ENCODE measurements at regions of chr16 and their contacts with region 1.

Region 1: DNA sequence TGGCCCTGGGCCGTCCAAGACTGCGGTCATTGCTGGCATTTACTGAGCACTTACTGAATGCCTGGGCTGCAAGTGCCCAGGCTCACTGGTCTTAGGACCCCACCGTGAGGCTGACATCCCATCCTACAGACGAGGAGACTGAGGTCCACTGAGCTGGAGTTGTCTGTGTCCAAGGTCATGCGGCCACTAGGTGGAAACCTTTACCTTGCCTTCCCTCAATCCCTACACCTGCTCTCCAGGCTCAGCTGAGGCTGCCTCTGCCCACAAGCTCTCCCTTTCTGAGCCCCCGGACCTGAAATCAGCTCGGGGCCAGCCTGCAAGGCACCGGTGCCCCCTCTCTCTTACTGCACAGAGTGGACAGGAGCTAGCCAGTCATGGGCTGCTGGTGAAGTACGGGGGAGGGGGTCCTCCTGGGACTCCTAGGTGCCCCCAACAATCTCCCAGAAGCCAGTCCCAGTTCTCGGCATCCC is 1.5 kb downstream of the CASKIN1 start:
- DNase-seq: peak; percentile 66 to 69
- H3K4me3 ChIP-seq: no peak overlapping the region
- H3K27ac ChIP-seq: no peak overlapping the region
- H3K4me1 ChIP-seq: peaks cover 10 to 13% of the 10 kb centered on the region in 2 donors
- H3K27me3 ChIP-seq: no peaks in the 10 kb centered on the region
- CTCF ChIP-seq: peak; percentile 34 to 80 (median 64)
- POLR2A ChIP-seq: no peak

Region 2: DNA sequence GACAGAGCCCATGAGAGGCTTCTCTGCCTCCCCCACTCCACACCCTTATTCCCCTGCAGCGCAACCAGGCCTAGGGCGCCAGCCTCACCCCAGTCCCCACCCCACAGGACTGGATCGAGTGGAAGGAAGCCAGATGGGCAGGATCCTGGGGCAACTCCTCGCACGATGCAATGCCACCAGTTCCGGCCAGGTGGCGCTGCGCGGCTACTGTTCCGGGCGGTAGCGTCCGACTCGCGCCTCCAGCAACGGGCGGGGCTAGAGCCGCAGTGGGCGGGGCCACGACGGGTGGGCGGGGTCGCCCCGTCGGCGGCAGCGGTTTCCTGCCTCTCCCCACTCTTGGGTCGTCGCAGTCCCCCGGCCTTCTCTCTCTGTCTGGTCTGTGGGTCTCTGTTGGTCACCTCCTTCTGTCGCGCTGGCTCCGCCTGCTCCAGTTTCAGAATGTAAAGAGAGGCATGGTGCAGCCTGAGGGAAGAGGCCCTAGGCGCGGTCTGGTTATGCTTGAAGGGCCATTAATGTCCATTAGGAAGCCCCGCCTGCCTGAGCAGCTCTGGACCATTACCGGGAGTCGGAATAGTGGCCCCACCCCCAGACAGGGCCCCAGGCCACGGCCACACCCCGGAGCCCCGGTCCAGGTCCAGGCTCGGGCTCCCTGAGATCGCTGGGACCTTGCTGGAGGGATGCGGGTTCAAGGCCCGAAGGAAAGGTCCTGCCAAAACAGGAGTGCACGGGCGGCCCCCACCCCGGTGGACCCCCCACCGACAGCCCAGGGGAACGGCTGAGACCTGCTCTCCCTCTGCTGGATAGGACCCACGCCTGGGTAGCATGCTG is 171.6 kb before region 1 on chr16:
- intact Hi-C with region 1: no loop called
- DNase-seq: peak; percentile 91
- H3K4me3 ChIP-seq: peak overlapping the region in 1 of 3 donors; percentile 17
- H3K27ac ChIP-seq: peak overlapping the region; percentile 31 to 68 (median 37)
- H3K4me1 ChIP-seq: peaks cover 11 to 49% of the 10 kb centered on the region in 2 donors
- H3K27me3 ChIP-seq: peaks cover 7% of the 10 kb centered on the region
- CTCF ChIP-seq: peak; percentile 89 to 99 (median 98)
- POLR2A ChIP-seq: peak in 1 of 2 donors; percentile 51

Region 3: GRCh38 chr16:2260250-2260649 is 65.4 kb after region 1 on chr16:
- intact Hi-C with region 1: loop called (anchors 5 kb)
- DNase-seq: no peak
- H3K4me3 ChIP-seq: no peak overlapping the region
- H3K27ac ChIP-seq: no peak overlapping the region
- H3K4me1 ChIP-seq: no peaks in the 10 kb centered on the region
- H3K27me3 ChIP-seq: no peaks in the 10 kb centered on the region
- CTCF ChIP-seq: no peak
- POLR2A ChIP-seq: no peak

Region 4: DNA sequence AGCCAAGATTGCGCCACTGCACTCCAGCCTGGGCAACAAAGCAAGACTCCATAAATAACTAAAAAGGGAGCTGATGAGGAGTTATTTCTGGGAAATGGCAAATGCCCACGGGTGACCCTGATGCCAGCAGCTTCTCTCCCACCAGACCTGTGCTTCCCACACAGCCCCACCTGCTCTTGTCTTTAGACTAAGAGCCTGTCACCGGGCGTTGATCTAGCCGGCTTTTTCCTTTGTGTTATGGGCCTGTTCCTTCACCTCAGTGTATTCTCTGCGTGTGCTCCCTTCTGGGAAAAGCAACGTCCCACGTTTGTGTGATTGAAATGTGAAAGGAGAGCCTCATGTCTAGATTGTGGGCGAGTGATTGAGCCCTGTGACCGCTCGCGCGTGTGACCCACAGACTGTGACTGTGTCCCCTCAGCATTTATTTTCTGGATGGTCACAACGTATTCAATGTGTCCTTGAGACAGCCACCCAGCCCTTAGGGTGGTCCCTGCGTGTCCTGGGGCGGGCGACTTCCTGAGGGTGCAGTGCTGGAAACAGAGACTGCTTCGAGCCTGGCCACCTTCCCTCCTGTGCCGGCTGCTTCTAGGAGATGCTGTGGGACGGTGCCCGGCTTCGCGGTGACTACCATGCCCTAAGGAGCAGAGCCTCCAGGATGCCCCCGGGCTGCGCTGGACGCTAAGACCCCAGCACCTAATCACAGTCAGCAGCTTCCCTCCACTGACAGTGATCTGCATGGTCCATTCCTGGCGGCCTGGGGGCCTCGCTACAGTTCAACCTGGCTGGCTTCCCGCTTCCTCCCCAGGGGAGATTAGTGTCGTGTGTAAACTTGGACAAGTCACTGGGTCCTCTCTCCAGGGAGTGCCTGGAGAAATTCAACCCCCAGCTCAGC is 80.8 kb after region 1 on chr16:
- intact Hi-C with region 1: no loop called
- DNase-seq: no peak
- H3K4me3 ChIP-seq: no peak overlapping the region
- H3K27ac ChIP-seq: no peak overlapping the region
- H3K4me1 ChIP-seq: no peaks in the 10 kb centered on the region
- H3K27me3 ChIP-seq: no peaks in the 10 kb centered on the region
- CTCF ChIP-seq: no peak
- POLR2A ChIP-seq: no peak

Region 5: GRCh38 chr16:2308089-2308962 is 113.4 kb after region 1 on chr16:
- intact Hi-C with region 1: no loop called
- DNase-seq: peak; percentile 90 to 91
- H3K4me3 ChIP-seq: no peak overlapping the region
- H3K27ac ChIP-seq: peak overlapping the region; percentile 49 to 76 (median 51)
- H3K4me1 ChIP-seq: peaks cover 13 to 21% of the 10 kb centered on the region in 2 donors
- H3K27me3 ChIP-seq: no peaks in the 10 kb centered on the region
- CTCF ChIP-seq: no peak
- POLR2A ChIP-seq: no peak

Region 6: DNA sequence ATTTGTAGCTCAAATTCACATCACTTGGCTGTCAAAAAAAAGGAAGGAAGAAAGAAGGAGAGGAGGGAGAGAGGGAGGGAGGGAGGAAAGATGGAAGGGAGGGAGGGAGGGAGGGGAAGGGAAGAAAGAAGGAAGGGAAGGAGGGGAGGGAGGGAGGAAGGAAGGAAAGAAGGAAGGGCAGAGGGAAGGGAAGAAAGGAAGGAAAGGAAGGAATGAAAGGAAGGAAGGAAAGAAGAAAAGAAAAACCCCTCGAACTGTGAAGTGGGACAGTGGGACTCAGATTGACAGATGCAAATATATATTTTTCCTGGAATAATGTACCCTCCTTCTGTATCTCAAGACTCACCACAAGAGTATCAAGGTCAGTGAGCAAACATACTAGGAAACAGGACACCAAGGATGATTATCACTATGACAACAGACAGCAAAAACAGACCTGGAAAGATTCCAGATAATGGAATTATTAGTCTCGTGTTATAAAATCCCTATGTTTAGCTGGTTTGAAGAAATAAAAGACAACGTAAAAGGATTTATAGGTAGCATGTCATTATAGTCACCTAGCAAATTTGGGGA is 169.8 kb after region 1 on chr16:
- intact Hi-C with region 1: no loop called
- DNase-seq: no peak
- H3K4me3 ChIP-seq: no peak overlapping the region
- H3K27ac ChIP-seq: no peak overlapping the region
- H3K4me1 ChIP-seq: peaks cover 0 to 9% of the 10 kb centered on the region in 2 donors
- H3K27me3 ChIP-seq: no peaks in the 10 kb centered on the region
- CTCF ChIP-seq: no peak
- POLR2A ChIP-seq: no peak

Region 7: DNA sequence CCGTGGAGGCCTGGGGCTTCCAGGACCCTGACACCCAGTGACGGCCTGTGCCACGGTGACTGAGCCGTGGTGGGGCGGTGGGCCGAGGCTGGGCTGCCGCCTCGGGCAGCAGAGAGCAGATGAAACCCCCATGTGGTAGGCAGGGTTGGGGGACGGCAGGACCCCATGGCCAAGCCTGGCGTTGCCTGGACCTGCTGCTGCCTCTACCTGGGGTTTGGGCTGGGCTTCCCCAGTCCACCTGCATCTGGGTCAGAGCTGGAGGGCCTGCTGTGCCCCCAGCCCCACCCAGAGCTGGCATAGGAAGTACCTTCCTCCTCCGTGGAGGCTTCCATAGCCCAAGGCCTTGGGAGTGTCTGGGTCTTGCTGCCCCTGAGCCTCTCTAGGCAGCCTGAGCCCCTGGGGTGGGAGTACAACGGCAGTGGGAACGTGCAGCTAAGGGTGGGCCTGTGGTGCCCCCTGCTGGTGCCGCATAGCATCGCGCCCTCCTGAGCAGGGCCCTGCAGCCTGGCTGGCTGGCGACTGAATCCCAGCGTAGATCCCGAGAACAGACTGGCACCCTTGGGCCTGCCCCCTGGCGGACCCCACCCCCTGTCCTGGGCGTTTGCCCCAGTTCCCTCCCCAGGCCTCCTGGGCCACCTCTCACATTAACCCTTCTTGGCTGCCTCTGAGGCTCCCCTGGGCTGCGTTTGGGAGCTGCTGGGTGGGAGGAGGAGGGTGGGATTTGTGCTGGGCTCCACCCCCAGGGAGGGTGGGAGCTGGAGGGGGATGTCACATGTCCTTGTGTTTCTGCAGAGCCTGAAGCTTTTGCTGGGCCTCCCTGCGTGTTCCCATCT is 306.2 kb after region 1 on chr16:
- intact Hi-C with region 1: loop called (anchors 5 kb)
- DNase-seq: peak; percentile 86 to 88
- H3K4me3 ChIP-seq: no peak overlapping the region
- H3K27ac ChIP-seq: peak overlapping the region in 2 of 3 donors; percentile 12 to 90
- H3K4me1 ChIP-seq: peaks cover 43 to 61% of the 10 kb centered on the region in 2 donors
- H3K27me3 ChIP-seq: no peaks in the 10 kb centered on the region
- CTCF ChIP-seq: peak; percentile 96 to 99 (median 98)
- POLR2A ChIP-seq: peak in 1 of 2 donors; percentile 5